K562 (cell line): ENCODE measurements at regions of chr6 and their contacts with region 1.

Region 1: GRCh38 chr6:119349323-119350042 is at the start of gene MAN1A1:
- DNase-seq: peak; percentile 96 to 99 (median 98)
- ATAC-seq: peak; percentile 86
- H3K4me3 ChIP-seq: peak within 1 kb of the TSS; percentile 77
- H3K27ac ChIP-seq: peak within 1 kb of the TSS; percentile 89
- H3K4me1 ChIP-seq: peaks cover 8 to 17% of the 10 kb centered on the region in 2 experiments; a peak in 2 of 5 replicates
- H3K27me3 ChIP-seq: no peaks in the 10 kb centered on the region
- CTCF ChIP-seq: peak in 2 of 3 experiments; percentile 28 to 47; a peak in 2 of 6 replicates
- EP300 ChIP-seq: no peak
- POLR2A ChIP-seq: peak; percentile 90
- RAD21 ChIP-seq: peak; percentile 40 to 42
- polyA plus RNA-seq, gene MAN1A1: 24.5 to 27.7 TPM

Region 2: DNA sequence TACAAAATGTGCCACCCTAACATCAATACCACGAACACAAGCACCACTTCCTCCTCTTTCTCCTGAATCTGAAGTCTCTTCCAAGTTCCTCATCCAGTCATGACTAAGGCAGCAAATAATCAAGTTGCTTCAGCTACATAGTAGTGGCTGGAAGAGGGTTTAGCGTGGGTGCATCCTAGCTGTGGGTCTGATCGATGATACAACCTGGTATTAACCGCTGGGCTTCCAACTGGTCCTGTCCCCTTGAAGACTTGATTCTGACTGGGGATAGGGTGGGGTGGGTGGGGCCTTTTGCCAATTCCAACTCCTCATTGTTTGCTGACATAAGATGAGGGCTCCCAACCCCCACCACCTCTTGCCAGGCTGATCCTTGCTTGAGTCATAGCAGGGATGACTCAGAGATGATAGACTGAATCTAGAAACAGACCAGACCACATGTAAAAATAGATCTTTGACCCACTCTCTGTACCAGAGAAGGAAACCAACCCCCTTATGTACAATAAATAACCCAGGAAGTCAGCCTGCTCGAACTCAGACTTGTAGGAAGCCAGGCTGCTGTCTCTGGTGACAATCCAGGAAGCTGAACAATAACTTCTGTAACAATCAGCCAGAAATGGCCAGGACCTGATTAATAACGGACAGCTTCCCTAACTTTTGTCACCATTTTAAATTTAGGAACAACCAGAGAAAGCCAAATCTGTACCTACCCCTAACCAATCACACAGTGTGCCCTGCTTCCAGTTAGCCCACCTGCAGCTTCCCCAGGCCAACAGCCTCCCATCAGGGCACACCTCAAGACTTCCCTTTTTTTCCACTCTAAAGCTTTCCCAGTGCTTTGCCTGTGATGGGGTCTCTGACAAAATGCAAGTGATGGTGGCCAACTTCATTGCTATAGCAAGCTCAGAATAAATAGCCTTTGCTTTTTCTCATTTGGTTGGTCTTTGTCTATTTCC is 202.1 kb before region 1 on chr6:
- CTCF ChIA-PET with region 1: no interaction called
- POLR2A ChIA-PET with region 1: no interaction called
- in situ Hi-C with region 1: no loop called
- intact Hi-C with region 1: loop called (anchors 5 kb)
- DNase-seq: peak; percentile 89 to 92 (median 91)
- ATAC-seq: peak; percentile 83
- H3K4me3 ChIP-seq: no peak overlapping the region
- H3K27ac ChIP-seq: peak overlapping the region; percentile 85
- H3K4me1 ChIP-seq: peaks cover 23 to 39% of the 10 kb centered on the region in 2 experiments
- H3K27me3 ChIP-seq: no peaks in the 10 kb centered on the region
- CTCF ChIP-seq: no peak
- EP300 ChIP-seq: peak; percentile 87
- POLR2A ChIP-seq: no peak
- RAD21 ChIP-seq: peak in 1 of 2 experiments; percentile 15; a peak in 1 of 4 replicates

Region 3: GRCh38 chr6:119436583-119436982 is 87.1 kb after region 1 on chr6:
- CTCF ChIA-PET with region 1: no interaction called
- POLR2A ChIA-PET with region 1: no interaction called
- in situ Hi-C with region 1: no loop called
- intact Hi-C with region 1: loop called (anchors 5 kb)
- DNase-seq: peak; percentile 24 to 66 (median 50)
- ATAC-seq: peak; percentile 88
- H3K4me3 ChIP-seq: no peak overlapping the region
- H3K27ac ChIP-seq: no peak overlapping the region
- H3K4me1 ChIP-seq: peaks cover 0 to 6% of the 10 kb centered on the region in 2 experiments; a peak in 2 of 5 replicates
- H3K27me3 ChIP-seq: no peaks in the 10 kb centered on the region
- CTCF ChIP-seq: no peak
- EP300 ChIP-seq: peak; percentile 33; the same call in 1 of the 2 replicates
- POLR2A ChIP-seq: no peak
- RAD21 ChIP-seq: no peak

Region 4: DNA sequence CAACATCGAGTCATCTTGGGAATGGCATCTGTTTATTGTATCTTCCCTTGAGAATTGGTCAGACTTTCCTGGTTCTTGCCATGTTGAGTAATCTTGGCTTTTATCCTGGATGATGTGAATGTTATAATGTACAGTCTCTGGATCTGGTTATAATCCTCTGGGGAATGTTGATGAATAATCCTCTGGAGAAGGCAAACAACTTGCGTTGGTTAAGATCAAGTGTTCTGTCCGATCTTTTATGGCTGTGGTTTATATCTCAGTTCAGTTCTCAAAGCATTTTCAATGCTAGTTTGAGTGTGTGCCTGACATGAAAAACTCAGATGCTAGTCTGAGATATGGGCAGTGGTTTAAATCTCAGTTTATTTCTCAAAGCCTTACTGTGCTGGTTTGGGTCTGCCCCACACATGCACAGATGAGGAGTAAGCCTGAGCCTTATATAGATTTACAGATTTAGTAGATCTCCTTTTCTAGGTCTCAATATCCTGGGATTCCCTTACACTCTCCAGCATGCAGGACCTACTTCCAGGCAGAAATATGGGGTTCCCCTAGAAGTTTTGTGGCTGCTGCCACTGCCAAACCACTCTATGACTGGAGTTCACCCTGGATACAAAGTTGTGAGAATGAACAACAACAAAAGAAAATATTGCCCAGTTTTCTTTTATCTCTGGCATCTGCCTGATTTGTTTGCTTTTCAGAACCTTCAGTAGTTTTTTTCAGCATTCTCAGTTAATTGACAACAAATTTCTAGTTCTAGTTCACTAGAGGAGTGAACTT is 191.8 kb after region 1 on chr6:
- CTCF ChIA-PET with region 1: no interaction called
- POLR2A ChIA-PET with region 1: interaction called, 5 read pairs
- in situ Hi-C with region 1: no loop called
- intact Hi-C with region 1: loop called (anchors 2 kb)
- DNase-seq: no peak
- ATAC-seq: 0 out of 3 replicates have a peak, but pooled peaks have one; percentile 12
- H3K4me3 ChIP-seq: no peak overlapping the region
- H3K27ac ChIP-seq: no peak overlapping the region
- H3K4me1 ChIP-seq: peaks cover 3 to 22% of the 10 kb centered on the region in 2 experiments; a peak in 4 of 5 replicates
- H3K27me3 ChIP-seq: no peaks in the 10 kb centered on the region
- CTCF ChIP-seq: no peak
- EP300 ChIP-seq: no peak
- POLR2A ChIP-seq: no peak
- RAD21 ChIP-seq: no peak

Region 5: DNA sequence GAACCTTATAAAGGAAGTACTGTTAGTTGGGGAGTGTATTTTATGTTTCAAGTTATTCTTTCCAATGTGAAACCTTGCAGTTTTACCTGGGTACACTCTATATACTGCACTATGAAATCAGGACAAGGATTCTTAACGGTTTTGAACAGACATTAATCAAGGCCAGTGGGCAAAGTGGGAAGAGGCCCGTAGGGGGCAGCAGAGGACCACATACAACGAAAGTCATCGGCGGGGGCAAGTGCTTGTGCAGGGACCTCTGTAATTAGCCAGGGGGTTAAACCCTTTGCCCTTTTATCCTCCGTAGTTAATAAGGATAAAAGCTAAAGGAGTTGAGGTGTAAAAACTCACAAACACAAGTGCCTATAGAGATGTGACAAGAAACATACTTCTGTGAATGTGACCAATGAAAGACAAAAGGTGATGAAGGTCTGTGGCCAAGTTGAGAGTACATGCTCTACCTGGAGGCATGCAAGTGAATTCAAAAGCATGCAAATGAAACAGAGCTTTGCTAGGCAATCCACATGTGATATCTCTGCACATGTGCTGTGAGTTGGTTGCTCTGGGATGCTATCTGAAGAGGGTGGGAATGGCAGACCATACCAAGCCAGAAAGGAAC is 392.8 kb after region 1 on chr6:
- CTCF ChIA-PET with region 1: no interaction called
- POLR2A ChIA-PET with region 1: no interaction called
- in situ Hi-C with region 1: no loop called
- intact Hi-C with region 1: loop called (anchors 1 kb)
- DNase-seq: peak; percentile 54 to 80 (median 60)
- ATAC-seq: peak; percentile 98
- H3K4me3 ChIP-seq: no peak overlapping the region
- H3K27ac ChIP-seq: no peak overlapping the region
- H3K4me1 ChIP-seq: no peaks in the 10 kb centered on the region
- H3K27me3 ChIP-seq: no peaks in the 10 kb centered on the region; a peak in 1 of 5 replicates
- CTCF ChIP-seq: peak; percentile 76 to 87 (median 82)
- EP300 ChIP-seq: no peak
- POLR2A ChIP-seq: no peak
- RAD21 ChIP-seq: peak; percentile 72 to 85

Region 6: DNA sequence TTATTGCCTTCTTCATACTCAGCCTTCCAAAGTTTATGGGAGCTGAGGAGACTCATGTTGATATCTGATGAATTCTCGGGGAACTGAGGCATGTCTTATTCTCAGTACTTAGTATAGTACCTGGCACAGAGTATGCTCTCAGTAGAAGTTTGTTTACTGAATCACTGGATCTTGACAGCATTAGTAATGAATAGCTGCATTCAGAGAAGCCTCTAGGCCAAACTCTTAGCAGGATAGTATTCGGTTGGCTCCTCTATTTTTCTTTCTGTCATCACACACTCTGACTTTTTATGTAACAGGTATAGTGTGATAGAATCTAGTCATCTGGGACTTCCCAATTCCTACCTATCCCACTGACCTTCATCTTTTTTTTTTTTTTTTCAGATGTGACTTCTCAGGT is 566.5 kb after region 1 on chr6:
- CTCF ChIA-PET with region 1: no interaction called
- POLR2A ChIA-PET with region 1: no interaction called
- in situ Hi-C with region 1: no loop called
- intact Hi-C with region 1: no loop called
- DNase-seq: no peak
- ATAC-seq: no peak
- H3K4me3 ChIP-seq: no peak overlapping the region
- H3K27ac ChIP-seq: no peak overlapping the region
- H3K4me1 ChIP-seq: no peaks in the 10 kb centered on the region
- H3K27me3 ChIP-seq: no peaks in the 10 kb centered on the region
- CTCF ChIP-seq: no peak
- EP300 ChIP-seq: no peak
- POLR2A ChIP-seq: no peak
- RAD21 ChIP-seq: no peak